ENCODE measurements at regions of chr10 and their contacts with region 1.

Region 1: GRCh38 chr10:91953600-91954160 is 30.1 kb downstream of the BTAF1 start:
- DNase-seq: no peak
- H3K4me3 ChIP-seq: no peak overlapping the region
- H3K27ac ChIP-seq: no peak overlapping the region
- H3K4me1 ChIP-seq: no peaks in the 10 kb centered on the region
- H3K27me3 ChIP-seq: no peaks in the 10 kb centered on the region
- CTCF ChIP-seq: no peak

Region 2: GRCh38 chr10:91838199-91838598 is 115.5 kb before region 1 on chr10:
- intact Hi-C with region 1: loop called (anchors 10 kb)
- DNase-seq: no peak
- H3K4me3 ChIP-seq: no peak overlapping the region
- H3K27ac ChIP-seq: no peak overlapping the region
- H3K4me1 ChIP-seq: no peaks in the 10 kb centered on the region
- H3K27me3 ChIP-seq: no peaks in the 10 kb centered on the region
- CTCF ChIP-seq: no peak

Region 3: DNA sequence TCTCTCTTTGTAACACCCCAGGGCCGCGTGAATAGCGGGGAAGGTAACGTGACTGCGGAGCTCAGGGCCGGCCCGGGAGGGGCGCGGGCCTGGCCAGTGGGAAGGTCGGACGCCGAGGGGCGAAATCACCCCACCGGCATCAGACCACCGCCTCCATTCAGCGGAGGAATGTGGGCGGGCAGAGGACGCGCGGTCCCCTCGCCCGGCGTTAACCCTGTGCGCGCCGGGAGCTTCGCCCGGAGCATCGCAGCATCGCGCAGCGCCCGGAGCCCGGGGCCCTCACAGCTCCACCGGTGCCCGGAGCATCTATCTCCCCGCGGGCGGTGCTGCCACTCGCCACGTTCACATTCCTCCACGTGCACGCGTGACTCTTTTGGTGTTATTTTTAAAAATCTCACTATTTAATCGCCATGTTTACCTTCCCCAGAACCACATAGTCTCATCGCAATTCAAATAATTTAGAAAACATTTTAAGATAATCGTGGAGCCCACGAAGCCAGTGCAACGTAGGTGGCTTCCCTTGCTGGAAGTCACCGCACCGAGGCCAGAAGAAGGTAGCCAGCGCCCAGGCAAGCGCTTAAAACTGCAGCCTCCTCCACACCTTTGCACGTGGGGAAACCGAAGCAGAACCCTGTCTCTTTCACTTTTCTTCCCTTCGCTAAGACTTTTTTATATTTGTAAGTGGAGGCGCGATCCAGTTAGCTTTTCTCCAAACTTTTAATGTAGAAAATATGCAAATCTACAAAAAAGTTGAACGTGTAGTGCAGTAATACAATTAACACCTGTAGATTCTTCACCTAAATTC is 66.2 kb before region 1 on chr10:
- intact Hi-C with region 1: no loop called
- DNase-seq: no peak
- H3K4me3 ChIP-seq: peak overlapping the region; percentile 49
- H3K27ac ChIP-seq: no peak overlapping the region
- H3K4me1 ChIP-seq: no peaks in the 10 kb centered on the region
- H3K27me3 ChIP-seq: peaks cover 6% of the 10 kb centered on the region
- CTCF ChIP-seq: no peak

Measured in colonic mucosa (tissue), 4 donors.